ENCODE measurements at regions of chr9 and their contacts with region 1.

Region 1: GRCh38 chr9:76658535-76659231 is 105.6 kb upstream of the PCA3 start:
- H3K4me3 Mint-ChIP-seq: no peak overlapping the region
- H3K27ac Mint-ChIP-seq: no peak overlapping the region
- H3K4me1 Mint-ChIP-seq: peaks cover 30% of the 10 kb centered on the region
- H3K27me3 Mint-ChIP-seq: no peaks in the 10 kb centered on the region

Region 2: GRCh38 chr9:76451234-76451633 is 207.4 kb before region 1 on chr9:
- intact Hi-C with region 1: loop called (anchors 1 kb)
- H3K4me3 Mint-ChIP-seq: no peak overlapping the region
- H3K27ac Mint-ChIP-seq: no peak overlapping the region
- H3K4me1 Mint-ChIP-seq: peaks cover 17% of the 10 kb centered on the region
- H3K27me3 Mint-ChIP-seq: no peaks in the 10 kb centered on the region

Measured in dendritic cell treated with granulocyte-macrophage colony-stimulating factor and Interleukin-4, amounts not matched to agents 40 ng/mL and 50 ng/mL, for 4 days (primary cell).